HepG2 (cell line): ENCODE measurements at regions of chr20 and their contacts with region 1.

Region 1: DNA sequence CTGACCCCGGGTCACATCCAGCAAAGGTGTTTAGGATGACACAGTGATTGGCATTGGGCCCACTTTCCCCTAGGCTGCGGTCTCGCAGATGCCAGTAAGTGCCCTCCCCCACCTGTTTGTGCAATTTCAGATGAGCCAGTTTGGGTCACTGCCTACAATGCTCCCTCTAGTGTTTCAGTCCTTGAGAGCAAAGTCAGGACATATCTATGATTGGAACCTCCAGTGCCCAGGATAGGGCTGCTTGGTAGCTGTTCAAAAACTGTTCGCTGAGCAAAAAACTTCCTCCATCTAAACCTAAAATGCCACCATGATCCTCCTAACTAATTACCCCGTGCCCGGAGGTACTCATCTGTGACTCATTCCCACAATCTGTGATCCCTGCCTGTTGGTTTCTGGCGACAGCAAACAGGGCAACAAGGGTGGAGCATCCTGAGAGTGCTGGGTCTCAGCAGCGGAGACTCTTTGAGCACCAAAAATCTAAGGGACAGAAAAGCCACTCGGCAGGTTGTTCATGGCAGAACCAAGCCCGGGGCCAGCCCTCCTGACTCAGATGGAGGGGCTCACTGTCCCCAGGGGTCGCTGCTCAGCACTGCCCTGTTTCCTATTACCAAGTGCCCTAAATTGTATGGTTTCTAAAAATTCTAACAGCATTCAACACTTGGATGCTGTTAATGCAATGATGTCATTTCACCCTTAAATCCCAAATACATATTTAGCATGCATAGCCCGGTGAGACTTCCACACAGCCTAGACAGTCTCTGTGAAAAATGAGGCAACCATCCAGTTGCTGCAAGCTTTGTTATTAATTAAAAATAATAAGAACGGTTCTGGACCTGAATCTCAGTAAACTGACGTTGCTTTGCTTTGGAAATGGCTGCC is 5.0 kb downstream of the VSX1 start:
- DNase-seq: peak; percentile 82
- ATAC-seq: peak; percentile 79
- H3K4me3 ChIP-seq: peak overlapping the region; percentile 22 to 65 (median 30); a peak in 5 of 6 replicates
- H3K27ac ChIP-seq: no peak overlapping the region
- H3K4me1 ChIP-seq: peaks cover 25% of the 10 kb centered on the region
- H3K27me3 ChIP-seq: peaks cover 10 to 70% of the 10 kb centered on the region in 2 experiments; a peak in 4 of 5 replicates
- CTCF ChIP-seq: peak; percentile 75
- EP300 ChIP-seq: 0 out of 4 replicates have a peak, but pooled peaks of 1 of the 2 experiments have one; percentile 26
- POLR2A ChIP-seq: no peak
- RAD21 ChIP-seq: peak; percentile 64

Region 2: DNA sequence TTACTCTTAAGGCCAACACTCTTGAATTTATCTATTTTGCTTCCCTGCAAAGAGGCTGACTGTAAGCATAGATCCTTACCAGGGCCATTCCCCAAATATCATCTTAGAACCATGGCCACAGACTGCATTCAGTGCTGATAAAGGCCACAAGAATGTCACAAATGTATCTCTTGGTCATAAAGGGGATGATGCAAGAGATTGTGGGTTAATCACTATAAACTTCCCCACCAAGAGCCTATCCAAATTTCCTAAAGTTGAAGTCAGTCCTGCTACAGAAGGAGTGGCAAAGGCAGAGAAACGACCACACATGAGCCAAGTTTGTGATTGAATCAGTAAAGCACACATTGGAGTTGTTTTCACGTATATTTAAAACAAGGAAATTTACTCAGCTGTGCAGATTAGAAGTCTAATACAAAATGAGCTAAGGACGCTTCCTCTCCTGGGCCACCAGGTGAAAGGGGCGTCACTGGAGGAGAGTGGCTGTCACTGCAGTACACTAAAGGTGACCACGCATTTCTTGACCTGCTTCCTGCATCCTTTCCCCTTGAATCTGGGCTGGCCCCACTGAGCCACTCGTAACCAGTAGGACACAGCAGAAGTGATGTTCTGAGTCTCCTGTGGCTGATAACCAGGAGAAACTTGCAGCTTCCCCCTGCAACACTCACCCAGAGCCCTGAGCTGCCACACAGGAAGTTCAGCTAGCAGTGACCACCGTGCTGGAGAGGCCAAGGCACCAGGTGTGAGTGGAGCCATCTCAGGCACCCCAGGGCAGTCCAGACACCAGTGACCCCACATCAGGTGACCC is 425.6 kb before region 1 on chr20:
- CTCF ChIA-PET with region 1: no interaction called
- POLR2A ChIA-PET with region 1: no interaction called
- in situ Hi-C with region 1: no loop called
- intact Hi-C with region 1: no loop called
- DNase-seq: no peak
- ATAC-seq: peak; percentile 49
- H3K4me3 ChIP-seq: no peak overlapping the region
- H3K27ac ChIP-seq: no peak overlapping the region
- H3K4me1 ChIP-seq: no peaks in the 10 kb centered on the region
- H3K27me3 ChIP-seq: peaks cover 4 to 17% of the 10 kb centered on the region in 2 experiments; a peak in 4 of 5 replicates
- CTCF ChIP-seq: no peak
- EP300 ChIP-seq: no peak
- POLR2A ChIP-seq: no peak
- RAD21 ChIP-seq: no peak

Region 3: DNA sequence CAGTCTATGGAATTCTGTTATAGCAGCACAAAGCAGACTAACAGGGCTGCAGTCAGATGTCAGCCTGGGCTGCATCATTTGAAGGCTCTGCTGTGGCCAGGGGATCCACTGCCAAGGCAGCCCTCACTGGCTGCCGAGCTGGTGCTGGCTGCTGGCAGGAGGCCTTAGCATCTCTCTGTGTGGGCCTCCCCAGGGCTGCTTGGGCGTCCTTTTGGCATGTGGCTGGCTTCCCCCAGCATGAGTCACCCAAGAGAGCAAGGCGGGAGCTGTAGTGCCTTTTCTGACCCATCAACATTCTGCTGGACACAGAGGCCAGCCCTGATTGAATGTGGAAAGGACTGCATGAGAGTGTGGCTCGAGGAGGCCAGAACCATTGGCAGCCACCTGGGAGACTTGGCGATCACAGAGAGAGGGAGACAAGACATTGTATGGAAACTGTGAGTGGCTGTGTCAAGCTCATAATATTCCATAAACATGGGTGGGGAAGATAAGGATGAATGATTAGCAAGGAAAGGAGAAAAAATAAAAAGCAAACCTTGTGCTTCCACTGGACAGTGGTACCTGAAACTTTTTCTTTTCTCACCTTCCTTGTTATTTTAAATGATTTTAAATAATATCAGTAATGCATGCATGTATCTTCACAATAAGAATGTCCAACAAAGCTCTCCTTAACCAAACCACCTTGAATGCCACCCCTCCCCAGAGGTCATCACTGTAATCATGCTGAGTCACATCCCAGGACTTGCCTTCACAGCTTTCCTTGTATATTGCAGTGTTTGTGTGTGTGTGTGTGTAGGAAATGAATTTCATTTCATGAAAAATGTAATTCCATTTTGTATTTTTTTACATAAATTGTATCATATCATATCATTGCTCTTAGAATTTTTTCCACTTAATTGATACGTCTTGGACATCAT is 59.9 kb after region 1 on chr20:
- CTCF ChIA-PET with region 1: no interaction called
- POLR2A ChIA-PET with region 1: no interaction called
- in situ Hi-C with region 1: no loop called
- intact Hi-C with region 1: loop called (anchors 5 kb)
- DNase-seq: no peak
- ATAC-seq: no peak; the same call in 2 of the 3 replicates
- H3K4me3 ChIP-seq: no peak overlapping the region
- H3K27ac ChIP-seq: no peak overlapping the region
- H3K4me1 ChIP-seq: no peaks in the 10 kb centered on the region
- H3K27me3 ChIP-seq: peaks cover 4 to 63% of the 10 kb centered on the region in 2 experiments; a peak in 4 of 5 replicates
- CTCF ChIP-seq: no peak
- EP300 ChIP-seq: no peak
- POLR2A ChIP-seq: no peak
- RAD21 ChIP-seq: no peak